ENCODE measurements at regions of chr22 and their contacts with region 1.

Region 1: GRCh38 chr22:25368271-25368670 is 148.8 kb downstream of the CRYBB2 start:
- DNase-seq: peak; percentile 77
- ATAC-seq: peak; percentile 74
- H3K4me3 ChIP-seq: no peak overlapping the region
- H3K27ac ChIP-seq: no peak overlapping the region
- H3K4me1 ChIP-seq: peaks cover 13% of the 10 kb centered on the region; the same call in 1 of the 2 replicates
- H3K27me3 ChIP-seq: no peaks in the 10 kb centered on the region
- CTCF ChIP-seq: no peak
- POLR2A ChIP-seq: no peak
- RAD21 ChIP-seq: no peak

Region 2: GRCh38 chr22:25403811-25404471 is 35.7 kb after region 1 on chr22:
- CTCF ChIA-PET with region 1: interaction called, 5 read pairs
- POLR2A ChIA-PET with region 1: no interaction called
- dilution Hi-C with region 1: no loop called
- in situ Hi-C with region 1: no loop called
- intact Hi-C with region 1: loop called (anchors 2 kb)
- DNase-seq: peak; percentile 41
- ATAC-seq: peak; percentile 4
- H3K4me3 ChIP-seq: peak overlapping the region; percentile 93
- H3K27ac ChIP-seq: peak overlapping the region; percentile 61
- H3K4me1 ChIP-seq: peaks cover 30% of the 10 kb centered on the region
- H3K27me3 ChIP-seq: no peaks in the 10 kb centered on the region
- CTCF ChIP-seq: no peak
- POLR2A ChIP-seq: no peak
- RAD21 ChIP-seq: no peak